OCI-LY7 (cell line): ENCODE measurements at regions of chr1 and their contacts with region 1.

Region 1: DNA sequence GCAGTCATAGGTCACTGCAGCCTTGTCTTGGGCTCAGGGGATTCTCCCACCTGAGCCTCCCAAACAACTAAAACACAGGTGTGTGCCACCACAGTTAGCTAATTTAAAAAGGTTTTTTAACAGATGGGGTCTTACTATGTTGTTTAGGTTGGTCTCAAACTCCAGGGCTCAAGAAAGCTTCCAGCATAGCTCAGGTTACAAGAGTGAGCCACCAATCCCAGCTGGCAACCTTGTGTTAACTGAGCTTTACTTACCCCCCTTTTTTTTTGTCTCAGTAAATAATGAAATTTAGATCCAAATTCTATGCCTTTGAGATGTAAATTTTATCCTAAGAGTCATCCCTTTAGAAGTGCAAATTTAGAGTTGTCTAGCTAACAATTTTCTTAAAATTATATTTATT is 103.9 kb upstream of the OLFM3 start:
- DNase-seq: no peak
- H3K4me3 ChIP-seq: no peak overlapping the region
- H3K27ac ChIP-seq: no peak overlapping the region
- H3K4me1 ChIP-seq: no peaks in the 10 kb centered on the region
- CTCF ChIP-seq: no peak

Region 2: DNA sequence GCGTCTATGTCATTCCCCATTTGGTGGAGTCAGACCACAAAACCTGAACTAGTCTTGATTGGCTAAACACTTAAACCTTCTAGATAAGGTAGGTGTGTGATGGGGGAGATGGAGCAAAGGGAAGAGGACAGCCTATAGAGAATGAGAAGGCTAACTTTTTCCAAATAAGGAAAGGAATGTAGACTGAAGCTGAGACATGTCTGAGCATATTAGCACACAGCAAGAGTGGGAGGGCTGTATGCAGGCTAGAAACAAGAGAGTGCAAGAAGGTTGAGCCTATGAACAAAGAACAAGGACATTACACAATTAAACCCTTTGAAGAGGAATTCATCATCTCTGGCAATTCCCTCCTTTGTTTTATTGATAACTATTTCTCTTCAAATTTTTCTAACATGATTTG is 14.8 kb before region 1 on chr1:
- CTCF ChIA-PET with region 1: no interaction called
- POLR2A ChIA-PET with region 1: interaction called, 10 read pairs
- intact Hi-C with region 1: no loop called
- DNase-seq: no peak
- H3K4me3 ChIP-seq: no peak overlapping the region
- H3K27ac ChIP-seq: no peak overlapping the region
- H3K4me1 ChIP-seq: no peaks in the 10 kb centered on the region
- CTCF ChIP-seq: no peak

Region 3: GRCh38 chr1:102118150-102118549 is 17.5 kb after region 1 on chr1:
- CTCF ChIA-PET with region 1: no interaction called
- POLR2A ChIA-PET with region 1: no interaction called
- intact Hi-C with region 1: no loop called
- DNase-seq: no peak
- H3K4me3 ChIP-seq: no peak overlapping the region
- H3K27ac ChIP-seq: no peak overlapping the region
- H3K4me1 ChIP-seq: no peaks in the 10 kb centered on the region
- CTCF ChIP-seq: no peak